Activated naive CD4-positive, alpha-beta T cell treated with anti-CD3 and anti-CD28 coated beads, Interleukin-2, amount 10 ng/mL, durations not matched to agents 7 days and 5 days (primary cell): ENCODE measurements at regions of chr18 and their contacts with region 1.

Region 1: GRCh38 chr18:62982600-62983251 is 267.4 kb downstream of the PHLPP1 start:
- DNase-seq: peak; percentile 68
- H3K4me3 Mint-ChIP-seq: no peak overlapping the region
- H3K27ac Mint-ChIP-seq: no peak overlapping the region
- H3K4me1 Mint-ChIP-seq: peaks cover 4% of the 10 kb centered on the region
- H3K27me3 Mint-ChIP-seq: peaks cover 5% of the 10 kb centered on the region

Region 2: GRCh38 chr18:62637807-62638687 is 344.7 kb before region 1 on chr18:
- CTCF ChIA-PET with region 1: interaction called, 18 read pairs
- DNase-seq: peak; percentile 60
- H3K4me3 Mint-ChIP-seq: no peak overlapping the region
- H3K27ac Mint-ChIP-seq: no peak overlapping the region
- H3K4me1 Mint-ChIP-seq: peaks cover 2% of the 10 kb centered on the region
- H3K27me3 Mint-ChIP-seq: peaks cover 11% of the 10 kb centered on the region

Region 3: DNA sequence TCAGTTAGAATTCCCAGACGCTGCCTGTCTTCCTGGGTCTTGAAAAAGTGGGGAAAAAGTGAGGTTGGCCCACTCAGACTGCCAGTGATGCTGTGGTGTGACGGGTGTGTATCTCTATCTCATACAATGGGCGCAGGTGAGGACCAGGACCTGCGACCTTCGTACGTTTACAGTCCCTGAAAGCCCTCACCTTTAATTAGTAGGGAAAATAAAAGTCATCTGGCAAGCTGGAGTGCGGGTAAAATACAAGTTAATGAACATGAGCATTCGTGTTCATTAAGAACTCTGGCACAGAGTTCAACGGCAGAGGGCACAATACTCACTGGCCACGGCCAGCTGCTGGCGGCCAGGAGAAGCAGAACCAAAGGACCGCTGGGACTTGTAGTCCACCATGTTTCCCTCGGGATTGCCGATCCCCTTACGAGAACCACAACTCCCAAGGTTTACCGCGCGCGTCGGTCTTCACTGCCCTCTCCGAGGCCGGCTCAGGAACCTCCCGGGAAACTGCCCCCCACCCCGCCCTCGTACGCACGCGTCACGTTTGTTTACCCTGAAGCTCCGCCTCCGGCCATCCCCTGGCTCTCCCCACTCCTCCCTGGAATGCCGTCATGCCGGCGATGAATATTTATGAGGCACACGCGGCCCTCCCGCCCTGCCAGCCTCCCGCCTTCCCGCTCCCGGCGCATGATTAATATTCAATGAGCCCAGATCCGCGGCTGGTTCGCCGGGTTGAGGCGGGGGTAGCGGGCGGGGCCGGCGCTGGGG is 267.9 kb before region 1 on chr18:
- CTCF ChIA-PET with region 1: interaction called, 20 read pairs
- DNase-seq: peak; percentile 94
- H3K4me3 Mint-ChIP-seq: peak overlapping the region; percentile 85
- H3K27ac Mint-ChIP-seq: peak overlapping the region; percentile 90
- H3K4me1 Mint-ChIP-seq: peaks cover 24% of the 10 kb centered on the region
- H3K27me3 Mint-ChIP-seq: peaks cover 25% of the 10 kb centered on the region

Region 4: DNA sequence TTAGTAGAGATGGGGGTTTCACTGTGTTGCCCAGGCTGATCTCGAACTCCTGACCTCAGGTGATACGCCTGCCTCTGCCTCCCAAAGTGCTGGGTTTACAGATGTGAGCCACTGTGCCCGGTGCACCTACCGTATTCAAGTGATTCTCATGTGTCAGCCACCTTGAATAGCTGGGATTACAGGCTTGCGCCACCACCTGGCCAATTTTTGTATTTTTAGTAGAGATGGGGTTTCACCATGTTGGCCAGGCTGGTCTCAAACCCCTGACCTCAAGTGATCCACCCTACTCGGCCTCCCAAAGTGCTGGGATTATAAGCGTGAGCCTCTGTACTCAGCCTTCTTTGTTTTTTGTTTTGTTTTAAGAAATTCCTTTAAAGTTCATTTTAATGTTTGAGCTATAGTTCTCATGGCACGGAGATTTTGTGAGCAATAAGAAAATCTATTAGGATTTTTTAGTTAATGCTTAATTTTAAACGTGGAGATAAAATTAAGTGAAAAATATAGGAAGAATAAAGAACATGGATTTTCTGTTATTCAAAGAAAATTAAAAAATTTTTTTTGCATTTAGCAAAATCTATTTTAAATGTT is 24.7 kb before region 1 on chr18:
- CTCF ChIA-PET with region 1: interaction called, 18 read pairs
- DNase-seq: peak; percentile 64
- H3K4me3 Mint-ChIP-seq: no peak overlapping the region
- H3K27ac Mint-ChIP-seq: no peak overlapping the region
- H3K4me1 Mint-ChIP-seq: peaks cover 13% of the 10 kb centered on the region
- H3K27me3 Mint-ChIP-seq: no peaks in the 10 kb centered on the region

Region 5: GRCh38 chr18:63098018-63098981 is 115.6 kb after region 1 on chr18:
- CTCF ChIA-PET with region 1: no interaction called
- DNase-seq: peak; percentile 85
- H3K4me3 Mint-ChIP-seq: peak overlapping the region; percentile 27
- H3K27ac Mint-ChIP-seq: peak overlapping the region; percentile 91
- H3K4me1 Mint-ChIP-seq: peaks cover 69% of the 10 kb centered on the region
- H3K27me3 Mint-ChIP-seq: peaks cover 43% of the 10 kb centered on the region